ENCODE measurements at regions of chr9 and their contacts with region 1.

Region 1: GRCh38 chr9:130866474-130866965 is 30.1 kb downstream of the QRFP start:
- DNase-seq: peak; percentile 67
- ATAC-seq: peak; percentile 47
- H3K4me3 ChIP-seq: no peak overlapping the region
- H3K4me3 Mint-ChIP-seq: no peak overlapping the region
- H3K27ac ChIP-seq: no peak overlapping the region
- H3K27ac Mint-ChIP-seq: no peak overlapping the region
- H3K4me1 ChIP-seq: peaks cover 7 to 12% of the 10 kb centered on the region in 2 donors
- H3K4me1 Mint-ChIP-seq: peaks cover 15% of the 10 kb centered on the region
- H3K27me3 ChIP-seq: no peaks in the 10 kb centered on the region
- H3K27me3 Mint-ChIP-seq: no peaks in the 10 kb centered on the region
- CTCF ChIP-seq: peak; percentile 79

Region 2: DNA sequence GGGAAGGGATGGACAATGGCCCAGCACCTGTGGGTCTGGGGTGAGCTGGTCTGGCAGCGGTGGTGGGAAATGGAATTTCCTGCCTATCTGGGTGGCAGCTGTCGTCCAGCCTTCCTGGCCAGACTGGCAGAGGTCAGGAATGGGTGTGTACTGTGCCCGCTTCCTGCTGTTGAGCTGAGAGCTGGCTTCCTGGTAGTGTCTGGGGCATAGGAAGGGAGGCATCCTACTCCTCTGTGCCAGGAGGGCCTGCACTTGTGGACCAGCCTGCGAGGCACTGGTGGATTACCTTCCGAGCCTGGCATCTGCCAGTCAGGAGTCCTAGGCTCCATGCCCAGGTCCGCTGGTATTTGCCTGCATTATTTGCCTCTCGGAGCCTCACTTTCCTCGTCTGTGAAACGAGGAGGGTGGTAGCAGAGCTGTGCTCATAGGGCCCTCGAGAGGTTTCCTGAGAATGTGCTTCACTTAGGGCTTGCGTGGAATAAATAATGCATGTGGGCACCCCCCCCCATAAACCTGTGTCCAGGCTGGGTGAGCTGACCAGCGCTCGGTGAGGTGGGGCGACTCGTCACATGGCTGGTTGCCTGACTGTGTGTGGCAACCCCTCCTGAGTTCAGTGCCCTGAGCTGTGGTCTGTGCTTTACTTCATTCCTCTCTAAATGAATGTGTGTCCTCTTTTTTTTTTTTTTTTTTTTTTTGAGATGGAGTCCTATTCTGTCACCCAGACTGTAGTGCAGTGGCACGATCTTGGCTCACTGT is 553.2 kb before region 1 on chr9:
- CTCF ChIA-PET with region 1: no interaction called
- POLR2A ChIA-PET with region 1: no interaction called
- intact Hi-C with region 1: no loop called
- DNase-seq: no peak
- ATAC-seq: no peak
- H3K4me3 ChIP-seq: no peak overlapping the region
- H3K4me3 Mint-ChIP-seq: no peak overlapping the region
- H3K27ac ChIP-seq: no peak overlapping the region
- H3K27ac Mint-ChIP-seq: no peak overlapping the region
- H3K4me1 ChIP-seq: no peaks in the 10 kb centered on the region
- H3K4me1 Mint-ChIP-seq: no peaks in the 10 kb centered on the region
- H3K27me3 ChIP-seq: peaks cover 0 to 2% (median 0%) of the 10 kb centered on the region in 4 experiments
- H3K27me3 Mint-ChIP-seq: peaks cover 24% of the 10 kb centered on the region
- CTCF ChIP-seq: no peak

Region 3: DNA sequence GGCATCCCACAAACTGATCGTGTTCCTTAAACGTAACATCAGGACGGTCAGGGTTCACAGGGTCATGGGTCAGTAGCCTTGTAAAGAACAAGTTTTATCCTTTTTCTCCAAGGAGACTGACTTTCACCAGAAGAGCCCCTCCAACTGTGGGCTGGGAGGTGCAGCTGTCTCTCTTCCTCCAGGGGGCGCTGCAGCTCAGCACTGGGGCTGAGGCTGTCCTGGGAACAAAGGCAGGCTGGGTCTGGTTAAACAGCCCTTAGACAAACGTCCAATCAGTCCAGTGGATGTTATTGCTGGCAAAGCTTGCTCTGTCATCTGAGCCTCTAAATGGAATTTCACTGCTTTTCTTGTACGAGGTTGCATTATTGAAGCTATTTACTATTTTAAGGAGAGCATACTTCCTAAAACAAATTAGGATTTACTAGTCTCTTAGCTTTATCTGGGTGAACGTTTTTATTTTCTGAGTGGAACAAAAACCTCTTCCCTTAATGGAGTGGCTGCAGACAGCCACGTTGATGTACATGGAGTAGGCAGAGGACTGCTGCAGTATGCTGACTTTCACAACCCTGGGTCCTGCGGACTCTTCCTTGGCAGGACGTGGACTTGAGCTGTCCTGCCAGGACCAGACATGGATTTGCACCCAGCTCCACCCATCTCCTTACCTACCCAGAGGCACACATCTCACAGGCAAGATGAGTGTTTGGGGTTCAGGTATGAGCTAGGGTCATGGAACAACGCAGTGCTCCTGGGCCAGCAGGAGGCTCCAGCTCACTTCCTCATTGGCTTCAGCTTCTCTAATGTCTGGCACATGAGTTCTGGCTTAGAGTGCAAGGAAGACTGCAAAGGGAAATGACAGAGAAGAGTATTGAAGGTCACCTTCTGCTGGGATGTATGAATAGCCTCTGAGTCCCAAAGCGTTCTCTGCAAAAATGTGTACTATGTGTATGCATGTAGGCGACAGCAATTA is 165.2 kb before region 1 on chr9:
- CTCF ChIA-PET with region 1: interaction called, 133 read pairs
- POLR2A ChIA-PET with region 1: no interaction called
- intact Hi-C with region 1: no loop called
- DNase-seq: peak; percentile 73
- ATAC-seq: peak; percentile 67
- H3K4me3 ChIP-seq: no peak overlapping the region
- H3K4me3 Mint-ChIP-seq: no peak overlapping the region
- H3K27ac ChIP-seq: no peak overlapping the region
- H3K27ac Mint-ChIP-seq: no peak overlapping the region
- H3K4me1 ChIP-seq: no peaks in the 10 kb centered on the region
- H3K4me1 Mint-ChIP-seq: peaks cover 15% of the 10 kb centered on the region
- H3K27me3 ChIP-seq: no peaks in the 10 kb centered on the region
- H3K27me3 Mint-ChIP-seq: no peaks in the 10 kb centered on the region
- CTCF ChIP-seq: peak; percentile 96

Region 4: GRCh38 chr9:130770679-130771442 is 95.7 kb before region 1 on chr9:
- CTCF ChIA-PET with region 1: interaction called, 11 read pairs
- POLR2A ChIA-PET with region 1: no interaction called
- intact Hi-C with region 1: loop called (anchors 1 kb)
- DNase-seq: peak; percentile 50
- ATAC-seq: no peak
- H3K4me3 ChIP-seq: no peak overlapping the region
- H3K4me3 Mint-ChIP-seq: no peak overlapping the region
- H3K27ac ChIP-seq: no peak overlapping the region
- H3K27ac Mint-ChIP-seq: no peak overlapping the region
- H3K4me1 ChIP-seq: peaks cover 15 to 22% of the 10 kb centered on the region in 2 donors
- H3K4me1 Mint-ChIP-seq: peaks cover 37% of the 10 kb centered on the region
- H3K27me3 ChIP-seq: no peaks in the 10 kb centered on the region
- H3K27me3 Mint-ChIP-seq: no peaks in the 10 kb centered on the region
- CTCF ChIP-seq: peak; percentile 69

Region 5: GRCh38 chr9:130780865-130781504 is 85.5 kb before region 1 on chr9:
- CTCF ChIA-PET with region 1: no interaction called
- POLR2A ChIA-PET with region 1: no interaction called
- intact Hi-C with region 1: no loop called
- DNase-seq: no peak
- ATAC-seq: no peak
- H3K4me3 ChIP-seq: no peak overlapping the region
- H3K4me3 Mint-ChIP-seq: no peak overlapping the region
- H3K27ac ChIP-seq: no peak overlapping the region
- H3K27ac Mint-ChIP-seq: no peak overlapping the region
- H3K4me1 ChIP-seq: no peaks in the 10 kb centered on the region
- H3K4me1 Mint-ChIP-seq: peaks cover 6% of the 10 kb centered on the region
- H3K27me3 ChIP-seq: no peaks in the 10 kb centered on the region
- H3K27me3 Mint-ChIP-seq: no peaks in the 10 kb centered on the region
- CTCF ChIP-seq: no peak

Region 6: GRCh38 chr9:130837002-130837511 is 29.5 kb before region 1 on chr9:
- CTCF ChIA-PET with region 1: interaction called, 10 read pairs
- POLR2A ChIA-PET with region 1: no interaction called
- intact Hi-C with region 1: no loop called
- DNase-seq: no peak
- ATAC-seq: no peak
- H3K4me3 ChIP-seq: no peak overlapping the region
- H3K4me3 Mint-ChIP-seq: peak overlapping the region; percentile 70
- H3K27ac ChIP-seq: no peak overlapping the region
- H3K27ac Mint-ChIP-seq: no peak overlapping the region
- H3K4me1 ChIP-seq: peaks cover 19% of the 10 kb centered on the region in 2 donors
- H3K4me1 Mint-ChIP-seq: peaks cover 45% of the 10 kb centered on the region
- H3K27me3 ChIP-seq: no peaks in the 10 kb centered on the region
- H3K27me3 Mint-ChIP-seq: no peaks in the 10 kb centered on the region
- CTCF ChIP-seq: no peak

Region 7: GRCh38 chr9:130940693-130941576 is 74.4 kb after region 1 on chr9:
- CTCF ChIA-PET with region 1: interaction called, 7 read pairs
- POLR2A ChIA-PET with region 1: no interaction called
- intact Hi-C with region 1: loop called (anchors 1 kb)
- DNase-seq: peak; percentile 76
- ATAC-seq: peak; percentile 84
- H3K4me3 ChIP-seq: peak overlapping the region in 1 of 5 experiments; percentile 19
- H3K4me3 Mint-ChIP-seq: peak overlapping the region; percentile 47
- H3K27ac ChIP-seq: no peak overlapping the region
- H3K27ac Mint-ChIP-seq: no peak overlapping the region
- H3K4me1 ChIP-seq: peaks cover 19 to 32% of the 10 kb centered on the region in 2 donors
- H3K4me1 Mint-ChIP-seq: peaks cover 21% of the 10 kb centered on the region
- H3K27me3 ChIP-seq: peaks cover 0 to 53% (median 27%) of the 10 kb centered on the region in 4 experiments
- H3K27me3 Mint-ChIP-seq: peaks cover 55% of the 10 kb centered on the region
- CTCF ChIP-seq: peak; percentile 89